MCF 10A (cell line): ENCODE measurements at regions of chr15 and their contacts with region 1.

Region 1: DNA sequence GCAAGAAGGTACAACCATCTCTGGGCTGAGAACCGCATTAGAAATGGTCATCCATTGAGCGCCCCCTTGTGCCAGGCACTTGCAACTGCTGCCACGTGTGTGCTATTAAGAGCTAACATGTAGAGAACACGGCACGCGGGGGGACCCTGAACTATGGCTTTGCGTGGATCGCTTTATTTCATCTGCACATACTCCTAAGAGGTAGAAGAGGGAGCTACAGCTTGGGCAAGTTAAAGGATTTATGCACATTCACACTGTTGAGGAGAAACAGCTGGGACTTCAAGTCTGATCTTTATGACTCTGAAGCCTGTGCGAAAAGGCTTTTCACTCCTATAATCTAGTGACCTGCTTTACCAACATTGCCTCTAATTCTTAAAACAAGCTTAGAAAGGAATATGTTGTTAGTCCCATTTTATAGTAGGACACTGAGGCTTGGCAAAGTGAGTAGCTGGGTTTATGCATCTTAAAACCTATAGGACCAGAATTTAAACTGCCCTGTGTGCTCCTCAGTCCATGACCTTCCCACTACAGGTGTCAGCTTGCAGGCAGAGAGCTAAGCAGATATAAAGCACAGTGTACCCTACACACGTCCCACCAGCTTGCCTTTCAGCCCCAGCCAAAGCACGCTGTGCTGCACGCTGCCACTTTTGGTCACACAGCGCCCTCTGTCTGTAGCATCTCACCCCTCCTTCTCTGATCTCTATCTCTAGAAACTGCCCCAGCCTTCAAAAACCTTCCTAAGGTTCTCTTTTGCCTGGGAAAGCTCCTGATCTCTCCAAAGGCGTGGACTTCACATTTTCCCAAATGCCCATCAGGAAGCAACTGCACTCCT is 57.8 kb downstream of the STARD5 start:
- DNase-seq: peak; percentile 82
- H3K4me3 Mint-ChIP-seq: peak overlapping the region; percentile 37
- H3K27ac Mint-ChIP-seq: no peak overlapping the region
- H3K4me1 Mint-ChIP-seq: peaks cover 9% of the 10 kb centered on the region
- H3K27me3 Mint-ChIP-seq: no peaks in the 10 kb centered on the region
- CTCF ChIP-seq: peak; percentile 85

Region 2: GRCh38 chr15:80776420-80777045 is 489.6 kb before region 1 on chr15:
- CTCF ChIA-PET with region 1: interaction called, 10 read pairs
- POLR2A ChIA-PET with region 1: no interaction called
- intact Hi-C with region 1: loop called (anchors 2 kb)
- DNase-seq: peak; percentile 65
- H3K4me3 Mint-ChIP-seq: no peak overlapping the region
- H3K27ac Mint-ChIP-seq: peak overlapping the region; percentile 31
- H3K4me1 Mint-ChIP-seq: peaks cover 20% of the 10 kb centered on the region
- H3K27me3 Mint-ChIP-seq: no peaks in the 10 kb centered on the region
- CTCF ChIP-seq: peak; percentile 54

Region 3: GRCh38 chr15:80849308-80849707 is 416.9 kb before region 1 on chr15:
- CTCF ChIA-PET with region 1: no interaction called
- POLR2A ChIA-PET with region 1: no interaction called
- intact Hi-C with region 1: no loop called
- DNase-seq: peak; percentile 93
- H3K4me3 Mint-ChIP-seq: no peak overlapping the region
- H3K27ac Mint-ChIP-seq: no peak overlapping the region
- H3K4me1 Mint-ChIP-seq: peaks cover 34% of the 10 kb centered on the region
- H3K27me3 Mint-ChIP-seq: no peaks in the 10 kb centered on the region
- CTCF ChIP-seq: no peak

Region 4: DNA sequence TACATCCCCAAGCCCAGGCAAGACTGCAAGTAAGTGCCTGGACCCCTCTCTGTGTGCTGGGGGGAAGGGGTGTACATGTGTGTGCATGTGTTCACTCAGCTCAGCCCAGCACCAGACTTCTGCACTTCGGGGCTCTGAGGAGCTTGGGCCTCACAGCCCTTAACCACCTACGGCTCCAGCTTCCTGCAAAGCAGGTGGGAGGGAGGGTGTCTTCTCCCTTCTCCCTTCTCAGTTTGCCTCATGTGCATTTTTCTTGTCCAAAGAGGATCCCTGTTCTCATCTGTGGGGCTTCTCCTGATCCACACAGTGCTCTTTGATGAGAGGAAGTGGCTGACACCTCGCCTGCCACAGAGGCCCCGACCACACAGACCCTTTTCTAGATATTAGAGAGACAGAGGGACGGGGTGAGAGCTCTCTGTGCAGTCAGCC is 345.9 kb before region 1 on chr15:
- CTCF ChIA-PET with region 1: no interaction called
- POLR2A ChIA-PET with region 1: no interaction called
- intact Hi-C with region 1: no loop called
- DNase-seq: no peak
- H3K4me3 Mint-ChIP-seq: no peak overlapping the region
- H3K27ac Mint-ChIP-seq: no peak overlapping the region
- H3K4me1 Mint-ChIP-seq: no peaks in the 10 kb centered on the region
- H3K27me3 Mint-ChIP-seq: no peaks in the 10 kb centered on the region
- CTCF ChIP-seq: no peak

Region 5: GRCh38 chr15:81091889-81092558 is 174.1 kb before region 1 on chr15:
- CTCF ChIA-PET with region 1: interaction called, 18 read pairs
- POLR2A ChIA-PET with region 1: interaction called, 3 read pairs
- intact Hi-C with region 1: no loop called
- DNase-seq: peak; percentile 84
- H3K4me3 Mint-ChIP-seq: no peak overlapping the region
- H3K27ac Mint-ChIP-seq: no peak overlapping the region
- H3K4me1 Mint-ChIP-seq: peaks cover 6% of the 10 kb centered on the region
- H3K27me3 Mint-ChIP-seq: peaks cover 10% of the 10 kb centered on the region
- CTCF ChIP-seq: no peak

Region 6: DNA sequence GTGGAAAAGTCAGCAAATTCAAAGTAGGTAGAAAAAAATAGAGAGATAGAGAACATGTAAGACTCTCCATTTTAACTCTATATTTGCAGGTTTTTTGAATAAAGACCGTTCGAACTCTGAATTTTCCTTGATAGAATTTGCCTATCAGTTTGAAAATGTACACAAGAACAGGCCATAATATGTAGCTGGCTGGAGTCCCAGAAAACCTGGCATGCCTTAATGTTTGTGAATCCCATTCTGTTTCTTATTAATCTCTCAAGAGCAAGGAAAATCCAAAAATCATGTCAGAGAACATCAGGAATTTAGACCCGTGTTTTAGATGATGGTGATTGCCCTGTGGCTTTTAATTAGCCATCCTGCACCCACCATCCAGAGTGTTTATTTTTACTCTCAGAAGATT is 139.3 kb before region 1 on chr15:
- CTCF ChIA-PET with region 1: interaction called, 17 read pairs
- POLR2A ChIA-PET with region 1: no interaction called
- intact Hi-C with region 1: no loop called
- DNase-seq: no peak
- H3K4me3 Mint-ChIP-seq: no peak overlapping the region
- H3K27ac Mint-ChIP-seq: no peak overlapping the region
- H3K4me1 Mint-ChIP-seq: no peaks in the 10 kb centered on the region
- H3K27me3 Mint-ChIP-seq: no peaks in the 10 kb centered on the region
- CTCF ChIP-seq: no peak

Region 7: GRCh38 chr15:81174792-81175327 is 91.3 kb before region 1 on chr15:
- CTCF ChIA-PET with region 1: interaction called, 12 read pairs
- POLR2A ChIA-PET with region 1: no interaction called
- intact Hi-C with region 1: no loop called
- DNase-seq: no peak
- H3K4me3 Mint-ChIP-seq: no peak overlapping the region
- H3K27ac Mint-ChIP-seq: no peak overlapping the region
- H3K4me1 Mint-ChIP-seq: peaks cover 15% of the 10 kb centered on the region
- H3K27me3 Mint-ChIP-seq: no peaks in the 10 kb centered on the region
- CTCF ChIP-seq: no peak

Region 8: DNA sequence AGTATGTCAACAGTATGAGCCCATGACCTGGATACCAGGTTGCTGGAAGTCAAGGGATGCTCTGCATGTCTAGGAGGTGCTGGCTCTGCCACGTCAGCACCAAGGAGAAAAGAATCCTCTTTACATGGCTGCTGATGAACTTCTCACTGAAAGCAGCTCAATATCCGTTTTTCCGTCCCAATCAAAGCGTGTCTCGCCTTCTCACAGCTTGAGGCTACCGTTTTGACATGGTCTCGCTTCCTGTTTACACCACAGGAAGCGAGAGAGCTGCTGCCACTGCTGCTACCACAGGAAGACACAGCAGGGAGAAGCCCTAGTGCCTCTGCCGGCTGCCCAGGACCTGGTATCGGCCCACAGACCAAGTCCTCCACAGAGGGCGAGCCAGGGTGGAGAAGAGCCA is 30.5 kb after region 1 on chr15:
- CTCF ChIA-PET with region 1: interaction called, 33 read pairs
- POLR2A ChIA-PET with region 1: no interaction called
- intact Hi-C with region 1: no loop called
- DNase-seq: peak; percentile 48
- H3K4me3 Mint-ChIP-seq: no peak overlapping the region
- H3K27ac Mint-ChIP-seq: no peak overlapping the region
- H3K4me1 Mint-ChIP-seq: peaks cover 22% of the 10 kb centered on the region
- H3K27me3 Mint-ChIP-seq: no peaks in the 10 kb centered on the region
- CTCF ChIP-seq: no peak

Region 9: DNA sequence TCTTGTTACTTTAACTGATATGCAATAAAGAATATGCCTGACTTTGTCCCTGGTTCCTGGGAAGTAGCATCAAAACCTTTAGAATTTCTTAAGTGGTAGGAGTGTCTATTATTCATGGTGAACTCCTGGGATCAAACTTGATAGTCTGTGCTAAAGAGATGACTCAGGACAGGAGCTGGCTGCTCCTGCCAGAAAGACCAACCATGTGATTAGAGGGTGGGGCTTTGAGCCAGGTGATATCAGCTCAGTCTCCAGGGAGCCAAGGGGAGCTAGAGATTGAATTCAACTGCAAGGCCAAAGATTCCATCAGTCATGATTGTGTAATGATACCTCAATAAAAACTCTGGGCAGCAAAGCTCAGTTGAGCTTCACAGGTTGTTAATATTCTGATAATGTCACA is 128.4 kb after region 1 on chr15:
- CTCF ChIA-PET with region 1: interaction called, 318 read pairs
- POLR2A ChIA-PET with region 1: no interaction called
- intact Hi-C with region 1: no loop called
- DNase-seq: peak; percentile 38
- H3K4me3 Mint-ChIP-seq: no peak overlapping the region
- H3K27ac Mint-ChIP-seq: no peak overlapping the region
- H3K4me1 Mint-ChIP-seq: peaks cover 15% of the 10 kb centered on the region
- H3K27me3 Mint-ChIP-seq: no peaks in the 10 kb centered on the region
- CTCF ChIP-seq: no peak